ENCODE measurements at regions of chr7 and their contacts with region 1.

Region 1: DNA sequence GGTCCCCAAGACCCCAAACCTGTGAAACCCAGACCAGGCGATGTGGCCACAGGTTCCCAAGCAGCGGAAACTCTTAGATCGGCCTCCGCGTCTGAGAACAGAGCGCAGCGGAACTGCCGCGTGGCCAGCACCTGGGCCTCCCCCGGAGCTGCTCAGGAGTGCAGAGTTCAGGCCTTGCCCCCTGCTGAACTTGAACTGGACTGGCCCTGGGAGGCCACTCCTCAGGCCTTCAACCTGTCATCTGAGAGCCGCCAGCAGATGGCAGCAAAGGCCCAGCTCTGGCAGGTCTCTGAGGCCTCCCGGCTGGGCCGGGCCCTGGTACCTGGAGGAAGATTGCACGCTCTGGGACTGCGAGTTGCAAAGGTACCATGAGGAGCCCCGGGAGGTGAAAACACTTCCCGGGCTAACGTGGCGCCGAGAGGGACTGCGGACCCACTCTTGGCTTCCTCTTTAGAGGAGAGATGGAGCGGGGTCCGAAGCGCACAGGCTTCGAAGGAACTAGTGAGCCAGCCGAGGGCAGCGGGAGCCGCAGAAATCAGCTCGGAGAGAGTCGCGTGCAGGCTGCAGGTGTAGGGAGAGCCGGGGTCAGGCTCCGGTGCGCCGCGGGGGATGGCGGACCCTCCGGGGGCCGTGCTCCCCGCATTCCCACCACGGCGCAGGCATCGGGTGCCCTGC is 89.1 kb downstream of the PAXIP1 start:
- DNase-seq: peak; percentile 97
- ATAC-seq: peak; percentile 95
- H3K4me3 Mint-ChIP-seq: peak overlapping the region; percentile 70
- H3K27ac Mint-ChIP-seq: no peak overlapping the region
- H3K4me1 Mint-ChIP-seq: peaks cover 4% of the 10 kb centered on the region
- H3K27me3 Mint-ChIP-seq: peaks cover 28% of the 10 kb centered on the region
- CTCF ChIP-seq: peak; percentile 75

Region 2: DNA sequence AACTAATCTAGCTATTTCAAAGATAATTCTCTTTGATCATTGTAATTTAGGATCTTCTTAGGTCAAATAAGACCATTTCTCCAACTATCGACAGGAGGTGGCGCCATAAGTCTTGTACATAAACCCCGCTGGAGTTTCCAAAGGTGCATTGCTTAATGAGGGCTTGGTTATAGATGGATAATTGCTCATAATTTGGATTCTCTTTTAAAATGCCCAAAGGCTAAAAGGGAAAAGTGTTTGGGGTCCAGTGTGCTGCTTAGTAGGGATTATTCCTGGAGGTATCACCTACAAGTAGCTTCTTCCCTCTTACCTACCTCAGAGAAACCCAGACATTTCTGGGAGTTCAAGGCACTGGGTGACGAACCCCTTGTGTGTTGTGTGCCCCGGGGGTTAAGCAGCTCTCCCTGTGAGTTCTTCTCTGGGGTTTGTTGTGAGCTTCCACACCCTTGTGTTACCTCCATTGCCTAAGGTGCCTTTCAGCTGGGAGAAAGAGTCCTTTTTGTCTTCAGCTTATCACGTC is 13.9 kb after region 1 on chr7:
- CTCF ChIA-PET with region 1: interaction called, 42 read pairs
- POLR2A ChIA-PET with region 1: no interaction called
- DNase-seq: peak; percentile 68
- ATAC-seq: peak; percentile 56
- H3K4me3 Mint-ChIP-seq: no peak overlapping the region
- H3K27ac Mint-ChIP-seq: no peak overlapping the region
- H3K4me1 Mint-ChIP-seq: peaks cover 37% of the 10 kb centered on the region
- H3K27me3 Mint-ChIP-seq: peaks cover 2% of the 10 kb centered on the region
- CTCF ChIP-seq: 0 out of 2 replicates have a peak, but pooled peaks have one; percentile 23

Region 3: GRCh38 chr7:154947604-154948003 is 33.8 kb after region 1 on chr7:
- CTCF ChIA-PET with region 1: interaction called, 22 read pairs
- POLR2A ChIA-PET with region 1: no interaction called
- DNase-seq: no peak
- ATAC-seq: peak; percentile 65
- H3K4me3 Mint-ChIP-seq: no peak overlapping the region
- H3K27ac Mint-ChIP-seq: no peak overlapping the region
- H3K4me1 Mint-ChIP-seq: no peaks in the 10 kb centered on the region
- H3K27me3 Mint-ChIP-seq: no peaks in the 10 kb centered on the region
- CTCF ChIP-seq: no peak

Region 4: GRCh38 chr7:154953006-154953684 is 39.4 kb after region 1 on chr7:
- CTCF ChIA-PET with region 1: interaction called, 22 read pairs
- POLR2A ChIA-PET with region 1: no interaction called
- DNase-seq: peak; percentile 86
- ATAC-seq: peak; percentile 92
- H3K4me3 Mint-ChIP-seq: no peak overlapping the region
- H3K27ac Mint-ChIP-seq: peak overlapping the region; percentile 84; the same call in 1 of the 2 replicates
- H3K4me1 Mint-ChIP-seq: no peaks in the 10 kb centered on the region
- H3K27me3 Mint-ChIP-seq: no peaks in the 10 kb centered on the region
- CTCF ChIP-seq: peak; percentile 82

Region 5: GRCh38 chr7:155043756-155044155 is 130.0 kb after region 1 on chr7:
- CTCF ChIA-PET with region 1: no interaction called
- POLR2A ChIA-PET with region 1: no interaction called
- DNase-seq: no peak
- ATAC-seq: peak; percentile 77
- H3K4me3 Mint-ChIP-seq: no peak overlapping the region
- H3K27ac Mint-ChIP-seq: no peak overlapping the region
- H3K4me1 Mint-ChIP-seq: peaks cover 21% of the 10 kb centered on the region
- H3K27me3 Mint-ChIP-seq: no peaks in the 10 kb centered on the region; the same call in 1 of the 2 replicates
- CTCF ChIP-seq: no peak

Region 6: DNA sequence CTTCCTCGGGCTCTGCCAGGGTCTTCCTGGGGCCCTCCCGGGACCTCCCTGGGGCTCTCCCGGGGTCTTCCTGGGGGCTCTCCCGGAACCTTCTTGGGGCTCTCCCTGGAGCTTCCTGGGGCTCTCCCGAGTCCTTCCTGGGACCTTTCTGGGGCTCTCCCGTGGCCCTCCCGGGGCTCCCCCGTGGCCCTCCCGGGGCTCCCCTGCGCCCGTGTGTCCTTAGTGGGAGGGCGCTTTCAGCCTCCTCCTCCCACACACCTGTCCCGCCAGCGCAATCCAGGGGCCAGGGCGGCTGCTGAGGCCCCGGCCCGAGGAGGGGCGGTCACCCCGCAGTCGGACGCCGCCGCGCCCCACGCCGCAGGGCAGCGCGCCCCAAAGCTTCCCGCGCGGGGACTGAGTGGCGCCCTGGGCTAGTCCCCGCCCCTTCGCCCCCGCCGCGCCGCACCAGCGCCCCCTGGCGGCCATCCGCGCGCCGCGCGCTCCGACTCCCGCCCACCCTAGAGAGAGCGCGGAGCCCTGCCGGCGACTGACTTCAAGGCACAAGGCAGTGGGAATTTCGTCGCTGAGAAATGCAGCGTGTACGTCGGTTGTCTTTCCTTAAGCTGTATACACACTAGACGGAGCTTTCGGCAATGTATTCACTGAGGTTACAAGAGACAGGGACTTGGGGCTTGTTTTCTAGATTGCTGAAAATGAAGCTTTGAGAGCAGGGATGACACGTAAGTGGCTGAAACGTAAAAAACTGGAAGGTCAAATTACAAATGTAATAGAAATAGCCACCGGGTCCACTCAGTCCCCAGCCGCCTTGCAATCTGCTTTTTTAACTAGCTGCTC is 431.0 kb after region 1 on chr7:
- CTCF ChIA-PET with region 1: interaction called, 14 read pairs
- POLR2A ChIA-PET with region 1: no interaction called
- DNase-seq: peak; percentile 82
- ATAC-seq: peak; percentile 86
- H3K4me3 Mint-ChIP-seq: peak overlapping the region; percentile 60
- H3K27ac Mint-ChIP-seq: no peak overlapping the region
- H3K4me1 Mint-ChIP-seq: no peaks in the 10 kb centered on the region
- H3K27me3 Mint-ChIP-seq: peaks cover 11% of the 10 kb centered on the region
- CTCF ChIP-seq: peak; percentile 97

Measured in WTC11 (cell line).